Breast epithelium (tissue), 4 donors: ENCODE measurements at regions of chr9 and their contacts with region 1.

Region 1: DNA sequence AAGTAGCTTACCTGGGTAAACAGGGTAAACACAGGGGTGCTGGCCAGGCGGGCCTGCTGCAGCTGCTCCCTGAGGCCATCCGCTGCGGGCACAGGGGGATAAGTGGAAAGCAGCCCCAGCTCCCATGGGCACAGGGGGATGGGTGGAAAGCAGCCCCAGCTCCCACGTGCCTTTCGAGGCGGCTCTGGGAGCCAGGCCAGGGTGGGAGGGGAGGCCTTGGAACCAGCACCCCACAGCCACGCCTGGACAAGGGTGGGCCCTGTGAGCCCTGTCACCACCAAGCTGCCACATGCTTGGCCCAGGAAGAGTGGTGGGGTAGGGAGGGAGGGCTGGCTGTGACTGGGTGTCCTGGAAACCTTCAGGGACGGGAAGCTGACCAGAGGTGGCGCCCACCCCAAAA is 7.8 kb upstream of the CARD9 start:
- DNase-seq: no peak
- H3K4me3 ChIP-seq: no peak overlapping the region
- H3K27ac ChIP-seq: no peak overlapping the region
- H3K4me1 ChIP-seq: no peaks in the 10 kb centered on the region
- H3K27me3 ChIP-seq: no peaks in the 10 kb centered on the region
- CTCF ChIP-seq: no peak
- POLR2A ChIP-seq: no peak

Region 2: DNA sequence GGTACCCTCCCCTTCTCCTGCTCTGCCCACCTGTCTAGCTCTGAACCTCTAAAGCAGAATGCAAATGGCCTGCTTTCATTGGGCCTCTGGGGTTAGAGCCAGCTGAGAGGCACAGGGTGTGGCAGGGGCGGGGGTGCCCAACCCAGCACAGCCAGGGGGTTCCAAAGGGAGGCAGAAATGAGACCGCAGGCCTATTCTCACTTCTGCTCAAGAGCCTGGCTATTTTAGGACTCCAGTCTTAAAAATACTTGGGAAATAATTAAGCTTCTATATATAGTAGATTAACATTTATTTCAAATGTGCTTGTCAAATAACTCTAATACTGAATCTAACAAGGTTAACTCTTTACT is 141.4 kb before region 1 on chr9:
- intact Hi-C with region 1: loop called (anchors 2 kb)
- DNase-seq: no peak
- H3K4me3 ChIP-seq: no peak overlapping the region
- H3K27ac ChIP-seq: no peak overlapping the region
- H3K4me1 ChIP-seq: peaks cover 0 to 11% of the 10 kb centered on the region in 2 donors
- H3K27me3 ChIP-seq: no peaks in the 10 kb centered on the region
- CTCF ChIP-seq: no peak
- POLR2A ChIP-seq: no peak